ENCODE measurements at regions of chr1 and their contacts with region 1.

Region 1: GRCh38 chr1:243325305-243325890 is 69.6 kb downstream of the SDCCAG8 start:
- H3K4me3 Mint-ChIP-seq: no peak overlapping the region
- H3K27ac Mint-ChIP-seq: no peak overlapping the region
- H3K4me1 Mint-ChIP-seq: peaks cover 25% of the 10 kb centered on the region
- H3K27me3 Mint-ChIP-seq: no peaks in the 10 kb centered on the region

Region 2: DNA sequence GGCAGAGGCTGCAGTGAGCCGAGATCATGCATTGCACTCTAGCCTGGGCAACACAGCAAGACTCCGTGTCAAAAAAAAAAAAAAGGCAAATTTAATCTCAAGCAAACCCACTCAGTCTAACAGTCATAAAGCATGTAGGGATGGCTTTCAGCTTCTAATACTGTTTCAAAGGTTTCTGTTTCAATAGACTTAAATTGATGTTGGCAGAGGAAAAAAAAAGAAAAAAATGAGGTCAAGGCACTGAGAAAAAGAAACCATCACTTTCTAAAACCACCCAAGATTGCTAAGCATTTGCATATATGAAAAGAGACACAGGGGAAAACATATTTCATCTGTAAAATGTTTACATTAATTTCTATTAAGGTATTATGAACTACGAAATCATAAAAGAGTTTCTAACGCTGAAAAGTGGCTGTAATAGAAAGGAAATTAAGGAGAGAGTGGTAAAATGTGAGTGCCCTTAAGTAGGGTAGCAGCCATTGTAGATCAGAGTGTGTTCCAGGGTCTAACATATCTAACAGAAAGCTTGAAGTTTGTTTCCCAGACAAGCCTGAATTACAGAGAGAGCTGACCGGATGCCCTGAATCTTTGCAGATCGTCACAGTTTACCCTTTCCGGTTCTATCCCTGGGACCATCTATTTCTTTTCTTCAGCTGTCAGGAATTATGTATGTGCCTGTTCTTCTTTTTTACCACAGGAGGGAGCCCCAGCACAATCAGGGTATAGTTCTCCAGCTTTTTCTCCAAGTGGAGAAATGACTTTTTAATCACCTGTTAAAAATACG is 870.9 kb before region 1 on chr1:
- intact Hi-C with region 1: loop called (anchors 10 kb)
- H3K4me3 Mint-ChIP-seq: no peak overlapping the region
- H3K27ac Mint-ChIP-seq: no peak overlapping the region
- H3K4me1 Mint-ChIP-seq: no peaks in the 10 kb centered on the region
- H3K27me3 Mint-ChIP-seq: peaks cover 4% of the 10 kb centered on the region

Region 3: DNA sequence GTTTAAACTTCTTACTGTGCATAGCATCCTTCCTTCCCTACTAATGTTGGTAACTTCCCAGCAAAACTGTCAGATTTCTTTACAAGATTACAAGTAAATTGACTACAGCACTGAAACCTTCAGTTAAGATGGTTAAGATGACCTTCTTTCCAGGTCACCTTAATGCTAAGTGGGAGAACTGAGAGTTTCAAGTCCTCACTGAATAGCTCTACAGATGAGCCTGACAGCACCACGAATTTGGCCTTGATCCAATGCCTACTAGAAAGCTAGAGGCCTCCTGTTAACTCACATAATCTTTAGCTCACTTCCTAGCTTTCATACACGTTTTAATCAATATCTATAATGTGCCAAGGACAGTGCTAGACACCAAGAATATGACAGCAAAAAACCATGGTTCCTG is 524.9 kb before region 1 on chr1:
- intact Hi-C with region 1: no loop called
- H3K4me3 Mint-ChIP-seq: no peak overlapping the region
- H3K27ac Mint-ChIP-seq: no peak overlapping the region
- H3K4me1 Mint-ChIP-seq: no peaks in the 10 kb centered on the region
- H3K27me3 Mint-ChIP-seq: no peaks in the 10 kb centered on the region

Region 4: GRCh38 chr1:243216741-243217140 is 108.7 kb before region 1 on chr1:
- intact Hi-C with region 1: loop called (anchors 5 kb)
- H3K4me3 Mint-ChIP-seq: no peak overlapping the region
- H3K27ac Mint-ChIP-seq: no peak overlapping the region
- H3K4me1 Mint-ChIP-seq: peaks cover 6% of the 10 kb centered on the region
- H3K27me3 Mint-ChIP-seq: no peaks in the 10 kb centered on the region

Region 5: GRCh38 chr1:243287652-243288051 is 37.7 kb before region 1 on chr1:
- intact Hi-C with region 1: loop called (anchors 5 kb)
- H3K4me3 Mint-ChIP-seq: peak overlapping the region; percentile 24
- H3K27ac Mint-ChIP-seq: peak overlapping the region; percentile 99
- H3K4me1 Mint-ChIP-seq: peaks cover 55% of the 10 kb centered on the region
- H3K27me3 Mint-ChIP-seq: no peaks in the 10 kb centered on the region

Measured in dendritic cell treated with granulocyte-macrophage colony-stimulating factor and Interleukin-4, amounts not matched to agents 40 ng/mL and 50 ng/mL, for 4 days (primary cell).